ENCODE measurements at regions of chr7 and their contacts with region 1.

Region 1: DNA sequence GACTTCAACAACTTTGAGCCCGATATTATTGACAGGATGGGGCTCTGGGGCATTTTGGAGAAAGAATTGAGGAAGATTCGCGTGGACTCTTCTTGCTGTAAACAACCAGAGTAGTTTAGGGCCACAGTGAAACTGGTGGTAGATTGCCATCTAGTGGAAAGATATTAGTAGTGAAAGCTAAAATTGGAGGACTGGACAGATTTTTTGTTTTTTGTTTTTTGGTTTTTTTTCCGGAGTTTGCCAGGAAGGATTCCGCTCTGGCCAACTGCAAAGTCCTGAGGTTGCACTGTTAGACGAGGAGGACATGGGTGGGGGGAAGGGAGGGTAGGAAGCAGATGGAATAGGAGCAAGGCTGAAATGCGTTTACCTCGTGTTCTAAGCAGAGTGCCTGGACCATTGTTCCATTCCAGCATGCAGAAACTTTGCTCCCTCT is 11.7 kb downstream of the NOBOX start:
- DNase-seq: peak; percentile 39
- ATAC-seq: peak; percentile 81
- H3K4me3 ChIP-seq: no peak overlapping the region
- H3K27ac ChIP-seq: no peak overlapping the region
- H3K4me1 ChIP-seq: 0 out of 2 replicates have a peak, but pooled peaks cover 1% of the 10 kb centered on the region
- H3K27me3 ChIP-seq: no peaks in the 10 kb centered on the region
- CTCF ChIP-seq: peak; percentile 57
- POLR2A ChIP-seq: no peak
- RAD21 ChIP-seq: peak; percentile 48; the same call in 1 of the 2 replicates

Region 2: GRCh38 chr7:144174613-144175012 is 217.2 kb before region 1 on chr7:
- CTCF ChIA-PET with region 1: no interaction called
- POLR2A ChIA-PET with region 1: no interaction called
- dilution Hi-C with region 1: no loop called
- in situ Hi-C with region 1: loop called (anchors 25 kb)
- intact Hi-C with region 1: no loop called
- DNase-seq: no peak
- ATAC-seq: no peak
- H3K4me3 ChIP-seq: no peak overlapping the region
- H3K27ac ChIP-seq: no peak overlapping the region
- H3K4me1 ChIP-seq: no peaks in the 10 kb centered on the region
- H3K27me3 ChIP-seq: no peaks in the 10 kb centered on the region
- CTCF ChIP-seq: no peak
- POLR2A ChIP-seq: no peak
- RAD21 ChIP-seq: no peak

Region 3: GRCh38 chr7:145534301-145534700 is 1142.5 kb after region 1 on chr7:
- CTCF ChIA-PET with region 1: no interaction called
- POLR2A ChIA-PET with region 1: no interaction called
- dilution Hi-C with region 1: no loop called
- in situ Hi-C with region 1: no loop called
- intact Hi-C with region 1: no loop called
- DNase-seq: no peak
- ATAC-seq: no peak
- H3K4me3 ChIP-seq: no peak overlapping the region
- H3K27ac ChIP-seq: no peak overlapping the region
- H3K4me1 ChIP-seq: no peaks in the 10 kb centered on the region
- H3K27me3 ChIP-seq: no peaks in the 10 kb centered on the region
- CTCF ChIP-seq: no peak
- POLR2A ChIP-seq: no peak
- RAD21 ChIP-seq: no peak